Thyroid gland (tissue), 4 donors: ENCODE measurements at regions of chr1 and their contacts with region 1.

Region 1: DNA sequence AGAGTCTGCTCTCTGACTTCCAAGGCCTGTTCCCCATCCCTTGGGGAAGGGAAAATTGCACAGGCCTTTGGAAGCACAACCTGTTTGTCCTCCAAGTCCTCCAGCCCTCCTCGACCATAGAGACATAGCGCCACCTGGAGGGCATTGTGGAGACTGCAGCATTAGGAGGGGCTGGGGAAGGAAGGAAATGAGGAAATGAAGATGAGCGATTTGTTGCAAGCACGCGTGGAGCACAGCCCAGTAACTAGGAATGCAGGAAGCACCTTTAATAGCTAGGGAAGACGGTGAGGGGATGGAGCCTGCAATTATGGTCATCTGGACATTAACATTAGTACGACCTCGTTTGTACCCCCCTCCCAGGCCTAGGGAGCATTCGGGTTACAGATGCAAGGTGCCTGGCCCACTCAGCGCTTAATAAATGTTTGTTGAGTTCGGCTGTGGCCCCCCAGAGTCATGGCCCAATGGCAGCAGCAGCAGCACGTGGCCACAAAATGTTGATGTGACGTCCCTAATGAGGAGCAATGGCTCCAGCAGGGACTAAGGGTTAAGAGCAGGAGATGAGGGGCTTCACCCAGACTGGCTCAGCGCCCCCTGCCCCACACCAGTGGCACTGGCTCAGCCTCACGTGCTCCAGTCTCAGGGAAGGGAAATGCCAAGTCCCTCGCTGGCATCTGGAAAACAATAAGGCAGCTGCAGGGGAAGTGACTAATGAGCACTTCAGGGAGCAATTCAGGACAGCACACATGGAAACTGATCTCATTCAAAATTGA is 8.0 kb upstream of the CAMK2N1 start:
- DNase-seq: peak; percentile 80 to 84
- H3K4me3 ChIP-seq: no peak overlapping the region
- H3K27ac ChIP-seq: no peak overlapping the region
- H3K4me1 ChIP-seq: peaks cover 0 to 13% of the 10 kb centered on the region in 2 donors
- H3K27me3 ChIP-seq: no peaks in the 10 kb centered on the region
- CTCF ChIP-seq: peak; percentile 90 to 99 (median 95)
- POLR2A ChIP-seq: no peak

Region 2: GRCh38 chr1:19485362-19486187 is 1008.4 kb before region 1 on chr1 and contains the start of gene CAPZB:
- intact Hi-C with region 1: no loop called
- DNase-seq: peak; percentile 95
- H3K4me3 ChIP-seq: peak within 1 kb of the TSS; percentile 77 to 100 (median 98)
- H3K27ac ChIP-seq: peak within 1 kb of the TSS; percentile 98 to 99 (median 98)
- H3K4me1 ChIP-seq: peaks cover 48 to 57% of the 10 kb centered on the region in 2 donors
- H3K27me3 ChIP-seq: no peaks in the 10 kb centered on the region
- CTCF ChIP-seq: no peak
- POLR2A ChIP-seq: peak; percentile 71 to 91
- total RNA-seq, gene CAPZB: 75.4 to 116 (median 93.1) TPM

Region 3: GRCh38 chr1:19918057-19918456 is 576.0 kb before region 1 on chr1:
- intact Hi-C with region 1: loop called (anchors 10 kb)
- DNase-seq: peak; percentile 81 to 85
- H3K4me3 ChIP-seq: no peak overlapping the region
- H3K27ac ChIP-seq: no peak overlapping the region
- H3K4me1 ChIP-seq: no peaks in the 10 kb centered on the region
- H3K27me3 ChIP-seq: no peaks in the 10 kb centered on the region
- CTCF ChIP-seq: peak; percentile 71 to 89 (median 80)
- POLR2A ChIP-seq: no peak

Region 4: GRCh38 chr1:20212685-20213331 is 281.2 kb before region 1 on chr1:
- intact Hi-C with region 1: loop called (anchors 5 kb)
- DNase-seq: peak; percentile 95 to 96
- H3K4me3 ChIP-seq: no peak overlapping the region
- H3K27ac ChIP-seq: peak overlapping the region; percentile 66 to 91 (median 73)
- H3K4me1 ChIP-seq: peaks cover 6 to 10% of the 10 kb centered on the region in 2 donors
- H3K27me3 ChIP-seq: no peaks in the 10 kb centered on the region
- CTCF ChIP-seq: peak; percentile 56 to 90 (median 76)
- POLR2A ChIP-seq: no peak

Region 5: GRCh38 chr1:20376880-20377494 is 117.0 kb before region 1 on chr1:
- intact Hi-C with region 1: loop called (anchors 5 kb)
- DNase-seq: peak; percentile 17 to 37
- H3K4me3 ChIP-seq: no peak overlapping the region
- H3K27ac ChIP-seq: no peak overlapping the region
- H3K4me1 ChIP-seq: peaks cover 0 to 7% of the 10 kb centered on the region in 2 donors
- H3K27me3 ChIP-seq: no peaks in the 10 kb centered on the region
- CTCF ChIP-seq: peak; percentile 25 to 64 (median 42)
- POLR2A ChIP-seq: no peak